Left ventricle myocardium superior (tissue), 1 donor: ENCODE measurements at regions of chr10 and their contacts with region 1.

Region 1: DNA sequence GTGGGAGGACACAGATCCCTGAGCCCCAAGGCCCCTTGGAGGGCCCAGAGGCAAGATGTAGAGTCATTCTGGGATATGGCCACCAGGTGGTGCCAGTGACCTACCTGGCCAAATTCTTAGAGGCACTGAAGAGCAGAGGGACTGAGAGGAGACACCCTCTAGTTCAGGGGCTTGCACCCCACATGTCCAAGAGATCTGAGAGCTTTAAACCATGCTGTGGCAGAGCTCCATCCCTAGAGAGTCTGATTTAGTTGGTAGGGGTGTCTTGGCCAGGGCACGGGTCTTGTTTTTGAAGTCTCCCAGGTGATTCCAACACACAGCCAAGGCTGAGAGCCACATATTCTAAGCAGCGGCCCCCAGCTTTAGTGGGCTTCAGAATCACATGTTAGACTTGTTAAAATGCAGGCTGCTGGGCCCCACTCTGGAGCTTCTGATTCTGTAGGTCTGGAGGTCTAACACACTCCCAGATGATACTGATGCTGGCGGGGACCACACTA is 52.5 kb downstream of the PRF1 start:
- DNase-seq: peak; percentile 75
- ATAC-seq: peak; percentile 78

Region 2: DNA sequence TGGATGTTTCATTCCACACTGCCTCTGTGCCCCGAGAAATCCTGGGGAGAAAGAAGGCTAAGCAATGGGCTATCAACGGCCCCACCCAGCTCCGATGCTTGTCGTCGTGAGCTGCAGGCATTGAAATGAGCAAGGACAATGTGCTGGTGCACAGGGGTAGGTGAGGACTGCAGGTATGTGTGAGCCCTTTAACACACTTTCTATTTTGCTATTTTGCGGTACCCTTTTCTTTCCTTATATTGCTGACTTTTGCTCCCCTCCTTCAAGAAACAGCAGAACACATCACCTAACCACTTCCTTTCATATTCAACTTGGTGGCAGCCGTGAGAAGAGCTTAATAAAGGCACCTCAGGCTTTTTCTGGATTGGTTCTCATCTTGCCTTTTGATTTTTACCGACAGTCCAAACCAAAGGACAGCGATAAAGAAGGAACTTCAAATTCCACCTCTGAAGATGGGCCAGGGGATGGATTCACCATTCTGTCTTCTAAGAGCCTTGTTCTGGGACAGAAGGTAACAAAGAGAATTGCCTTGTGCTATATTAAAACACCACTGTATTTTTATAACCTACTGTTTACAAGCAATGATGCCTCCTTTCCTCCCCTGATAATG is 456.6 kb before region 1 on chr10:
- intact Hi-C with region 1: no loop called
- DNase-seq: no peak
- ATAC-seq: no peak

Region 3: GRCh38 chr10:70337201-70337651 is 212.8 kb before region 1 on chr10:
- intact Hi-C with region 1: no loop called
- DNase-seq: no peak
- ATAC-seq: no peak

Region 4: DNA sequence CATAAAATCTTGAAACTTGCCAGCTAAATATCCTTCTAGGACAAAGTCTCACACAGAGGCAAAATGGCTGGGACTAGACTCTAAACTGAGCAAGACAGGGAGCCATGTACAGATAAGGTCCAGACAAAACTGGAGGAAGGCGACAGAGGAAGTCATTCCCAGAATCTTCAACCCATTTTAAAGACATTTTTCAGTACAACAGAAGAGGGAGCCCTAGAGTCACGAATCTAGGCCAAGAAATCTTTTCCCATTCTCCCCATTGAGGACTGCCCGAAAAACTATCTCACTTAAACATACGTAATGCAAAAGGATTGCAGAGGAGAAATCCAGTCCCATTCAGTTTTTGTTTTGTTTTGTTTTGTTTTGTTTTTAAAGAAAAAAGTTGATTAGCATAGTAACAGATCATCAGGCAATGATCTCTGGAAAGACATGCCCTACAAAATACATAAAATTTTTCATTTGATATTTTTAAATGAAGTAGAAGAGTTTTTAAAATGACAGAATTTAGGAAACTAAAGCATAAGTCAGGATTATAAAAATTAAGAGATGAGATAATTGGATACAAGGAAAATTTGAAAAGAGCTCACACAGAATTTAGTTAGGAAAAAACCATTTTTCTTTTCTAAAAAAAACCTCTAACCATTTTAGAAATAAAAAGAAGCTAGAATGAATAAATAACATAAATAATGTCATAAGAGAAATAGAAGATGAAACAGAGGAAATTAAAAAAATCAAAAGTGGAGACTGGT is 69.4 kb after region 1 on chr10:
- intact Hi-C with region 1: no loop called
- DNase-seq: no peak
- ATAC-seq: no peak

Region 5: GRCh38 chr10:70758757-70759514 is 208.9 kb after region 1 on chr10:
- intact Hi-C with region 1: loop called (anchors 5 kb)
- DNase-seq: peak; percentile 57
- ATAC-seq: peak; percentile 70

Region 6: DNA sequence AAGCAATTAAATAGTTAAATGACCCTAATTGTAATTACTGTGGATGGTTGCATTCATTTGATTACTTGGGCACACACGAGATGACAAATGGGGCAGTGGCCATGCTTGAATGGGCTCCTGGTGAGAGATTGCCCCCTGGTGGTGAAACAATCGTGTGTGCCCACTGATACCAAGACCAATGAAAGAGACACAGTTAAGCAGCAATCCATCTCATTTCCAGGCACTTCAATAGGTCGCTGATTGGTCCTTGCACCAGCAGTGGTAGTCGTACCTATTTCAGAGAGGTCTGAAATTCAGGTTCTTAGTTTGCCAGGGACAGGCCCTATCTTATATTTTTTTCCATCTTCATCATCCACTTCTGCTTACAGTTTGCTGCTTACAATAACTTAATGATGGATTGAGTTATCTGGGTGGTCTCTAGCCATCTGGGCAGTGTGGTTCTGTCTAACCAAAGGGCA is 330.1 kb after region 1 on chr10:
- intact Hi-C with region 1: loop called (anchors 5 kb)
- DNase-seq: peak; percentile 70
- ATAC-seq: peak; percentile 75

Region 7: GRCh38 chr10:70956029-70956759 is 406.2 kb after region 1 on chr10:
- intact Hi-C with region 1: no loop called
- DNase-seq: no peak
- ATAC-seq: peak; percentile 40